ENCODE measurements at regions of chr6 and their contacts with region 1.

Region 1: GRCh38 chr6:88982720-88983119 is 19.3 kb upstream of the RNGTT start:
- DNase-seq: peak in 1 of 2 donors; percentile 35
- ATAC-seq: peak; percentile 88 to 97 (median 93)
- H3K4me3 ChIP-seq: no peak overlapping the region
- H3K27ac ChIP-seq: no peak overlapping the region
- H3K4me1 ChIP-seq: peaks cover 0 to 12% (median 6%) of the 10 kb centered on the region in 9 donors
- H3K27me3 ChIP-seq: no peaks in the 10 kb centered on the region
- CTCF ChIP-seq: peak; percentile 51 to 87 (median 77)

Region 2: GRCh38 chr6:88992741-88993552 is 10.2 kb after region 1 on chr6:
- intact Hi-C with region 1: no loop called
- DNase-seq: no peak
- ATAC-seq: no peak
- H3K4me3 ChIP-seq: no peak overlapping the region
- H3K27ac ChIP-seq: no peak overlapping the region
- H3K4me1 ChIP-seq: peaks cover 0 to 14% (median 0%) of the 10 kb centered on the region in 9 donors
- H3K27me3 ChIP-seq: no peaks in the 10 kb centered on the region
- CTCF ChIP-seq: no peak

Region 3: GRCh38 chr6:89035252-89036106 is 52.8 kb after region 1 on chr6:
- intact Hi-C with region 1: loop called in 4 of 10 experiments (anchors 5 to 10 kb)
- DNase-seq: peak; percentile 70 to 77
- ATAC-seq: peak; percentile 89 to 96 (median 93)
- H3K4me3 ChIP-seq: peak overlapping the region in 7 of 10 donors; percentile 6 to 23 (median 19)
- H3K27ac ChIP-seq: peak overlapping the region; percentile 65 to 95 (median 84)
- H3K4me1 ChIP-seq: peaks cover 4 to 54% (median 34%) of the 10 kb centered on the region in 9 donors
- H3K27me3 ChIP-seq: no peaks in the 10 kb centered on the region
- CTCF ChIP-seq: no peak

Region 4: DNA sequence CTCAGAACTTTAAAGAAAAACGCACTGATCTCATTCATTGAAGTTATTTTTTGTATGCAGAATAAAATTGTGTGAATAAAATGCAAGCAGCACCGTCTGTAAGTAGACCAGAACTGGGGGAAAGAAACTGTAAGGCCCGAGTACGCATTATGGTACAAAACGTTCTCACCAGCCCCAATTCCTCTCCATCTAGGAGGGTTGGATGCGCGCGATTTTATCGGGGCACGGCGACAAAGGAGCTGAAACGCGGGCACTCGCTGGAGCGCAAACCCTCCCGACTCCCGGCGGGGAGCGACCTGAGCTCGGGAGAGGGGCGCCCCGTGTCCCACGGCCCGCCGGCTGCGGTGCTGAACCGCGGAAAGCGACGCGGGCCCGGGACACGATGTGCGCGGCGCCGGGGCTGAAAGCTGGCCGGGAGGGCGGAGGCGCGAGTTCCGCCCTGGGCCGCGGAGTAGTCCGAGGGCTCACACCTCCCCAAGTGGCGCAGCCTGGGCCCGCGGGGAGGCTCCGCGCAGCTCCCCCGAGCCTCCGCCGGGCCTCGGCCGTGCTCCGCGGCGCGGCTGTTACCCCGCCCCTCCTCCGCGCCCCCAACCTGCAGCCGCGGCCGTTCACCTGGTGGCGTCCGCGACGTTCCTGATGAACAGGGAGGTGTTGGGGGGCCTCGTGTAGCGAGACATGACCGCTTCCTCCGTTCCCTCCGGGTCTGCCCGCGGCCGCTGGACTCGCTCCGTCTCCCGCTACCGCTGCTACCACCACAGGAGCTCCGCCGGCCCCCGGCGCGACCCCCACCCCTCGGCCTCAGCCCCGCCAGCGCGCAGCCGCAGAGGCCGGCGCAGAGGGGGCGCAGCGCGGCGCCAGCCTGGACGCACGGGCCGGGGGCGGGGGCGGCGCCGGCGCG is 134.7 kb after region 1 on chr6 and contains the start of gene SRSF12:
- intact Hi-C with region 1: loop called in 5 of 10 experiments (anchors 5 to 10 kb)
- DNase-seq: peak; percentile 13 to 36
- ATAC-seq: peak; percentile 80 to 90 (median 86)
- H3K4me3 ChIP-seq: peak within 1 kb of the TSS; percentile 53 to 96 (median 73)
- H3K27ac ChIP-seq: peak within 1 kb of the TSS in 3 of 10 donors; percentile 1 to 70 (median 46)
- H3K4me1 ChIP-seq: peaks cover 0 to 14% (median 7%) of the 10 kb centered on the region in 9 donors
- H3K27me3 ChIP-seq: no peaks in the 10 kb centered on the region
- CTCF ChIP-seq: peak in 1 of 9 donors; percentile 21
- total RNA-seq, gene SRSF12: 0.06 to 0.47 (median 0.17) TPM in 8 of 10 donors, not detected in the others

Region 5: DNA sequence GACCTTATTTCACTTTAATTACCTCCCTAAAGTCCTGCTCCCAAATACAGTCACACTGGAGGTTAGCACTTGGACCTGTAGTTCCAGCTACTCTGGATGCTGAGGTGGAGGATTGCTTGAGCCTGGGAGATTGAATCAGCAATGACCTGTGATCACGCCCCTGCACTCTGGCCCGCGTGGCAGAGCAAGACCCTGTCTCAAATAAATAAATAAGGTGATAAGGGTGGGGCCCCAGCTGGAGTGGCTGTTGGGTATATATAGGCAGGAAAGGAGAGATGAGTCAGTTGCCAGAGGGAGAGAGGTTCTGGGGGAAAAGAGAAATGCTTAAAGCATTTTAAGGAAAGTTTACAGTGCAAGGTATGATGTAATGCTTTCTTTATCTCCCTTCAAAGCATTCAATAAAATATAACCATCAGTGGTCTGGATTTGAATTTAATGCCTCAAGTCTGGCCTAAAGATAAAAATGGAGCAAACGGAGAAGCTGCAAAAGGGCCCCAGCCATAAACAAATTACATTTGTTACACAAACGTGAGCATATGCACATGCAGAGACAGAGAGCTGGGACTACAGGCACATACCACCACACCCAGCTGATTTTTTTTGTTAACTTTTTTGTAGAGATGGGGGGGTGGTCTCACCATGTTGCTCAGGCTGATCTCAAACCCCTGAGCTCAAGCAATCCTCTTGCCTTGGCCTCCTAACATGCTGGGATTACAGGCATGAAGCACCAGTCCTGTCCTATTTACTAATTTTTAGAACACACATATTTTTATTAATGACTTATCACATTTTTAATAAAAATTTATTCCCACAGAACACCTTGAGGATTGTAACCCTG is 157.0 kb after region 1 on chr6:
- intact Hi-C with region 1: loop called in 1 of 10 experiments (anchors 10 kb)
- DNase-seq: no peak
- ATAC-seq: no peak
- H3K4me3 ChIP-seq: no peak overlapping the region
- H3K27ac ChIP-seq: no peak overlapping the region
- H3K4me1 ChIP-seq: peaks cover 0 to 14% (median 0%) of the 10 kb centered on the region in 9 donors
- H3K27me3 ChIP-seq: no peaks in the 10 kb centered on the region
- CTCF ChIP-seq: no peak

Region 6: GRCh38 chr6:89352278-89353117 is 369.8 kb after region 1 on chr6 and contains the start of gene UBE2J1:
- intact Hi-C with region 1: loop called in 1 of 10 experiments (anchors 10 kb)
- DNase-seq: peak; percentile 95 to 97
- ATAC-seq: peak; percentile 94 to 98 (median 96)
- H3K4me3 ChIP-seq: peak within 1 kb of the TSS; percentile 66 to 95 (median 83)
- H3K27ac ChIP-seq: peak within 1 kb of the TSS; percentile 93 to 100 (median 98)
- H3K4me1 ChIP-seq: peaks cover 16 to 61% (median 49%) of the 10 kb centered on the region in 9 donors
- H3K27me3 ChIP-seq: no peaks in the 10 kb centered on the region
- CTCF ChIP-seq: peak in 1 of 9 donors; percentile 5
- total RNA-seq, gene UBE2J1: 9.9 to 23.9 (median 14.1) TPM

Region 7: DNA sequence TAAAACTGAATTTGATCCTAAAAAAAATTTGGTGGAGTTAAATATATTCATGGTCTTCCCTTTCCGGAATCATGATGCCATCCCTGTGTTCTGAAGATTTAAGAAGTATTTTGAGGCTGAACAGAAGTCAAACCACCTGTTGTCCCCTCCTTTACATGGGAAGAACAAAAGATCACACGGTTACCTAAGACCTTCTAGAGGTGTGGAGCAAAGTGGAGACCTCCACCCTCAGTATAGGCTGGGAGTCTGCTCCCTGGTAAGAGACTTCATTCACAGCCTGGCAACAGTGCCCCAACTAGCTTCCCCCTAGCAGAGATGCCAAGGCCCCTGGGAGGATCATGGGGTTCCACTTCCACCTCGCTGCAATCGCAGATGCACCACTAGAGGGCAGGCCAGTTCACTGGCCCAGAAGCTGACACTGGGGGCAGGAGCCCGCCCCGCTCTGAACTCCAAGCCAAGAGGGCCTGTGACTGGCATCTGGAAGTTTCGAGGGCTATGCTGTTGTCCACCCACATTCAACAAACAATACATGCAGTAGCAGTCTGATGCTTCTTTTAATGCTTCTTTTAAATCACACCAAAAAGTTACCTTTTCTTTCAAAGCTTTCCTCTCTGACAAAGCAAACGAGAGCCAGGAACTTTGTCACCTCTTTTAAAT is 389.3 kb after region 1 on chr6:
- intact Hi-C with region 1: loop called in 6 of 10 experiments (anchors 2 to 10 kb)
- DNase-seq: peak; percentile 73 to 76
- ATAC-seq: peak; percentile 82 to 93 (median 88)
- H3K4me3 ChIP-seq: no peak overlapping the region
- H3K27ac ChIP-seq: peak overlapping the region in 6 of 10 donors; percentile 2 to 48 (median 24)
- H3K4me1 ChIP-seq: peaks cover 0 to 37% (median 30%) of the 10 kb centered on the region in 9 donors
- H3K27me3 ChIP-seq: no peaks in the 10 kb centered on the region
- CTCF ChIP-seq: peak; percentile 82 to 99 (median 96)

Measured in heart right ventricle (tissue), 16 donors.